CD8-positive, alpha-beta memory T cell (primary cell): ENCODE measurements at regions of chr9 and their contacts with region 1.

Region 1: DNA sequence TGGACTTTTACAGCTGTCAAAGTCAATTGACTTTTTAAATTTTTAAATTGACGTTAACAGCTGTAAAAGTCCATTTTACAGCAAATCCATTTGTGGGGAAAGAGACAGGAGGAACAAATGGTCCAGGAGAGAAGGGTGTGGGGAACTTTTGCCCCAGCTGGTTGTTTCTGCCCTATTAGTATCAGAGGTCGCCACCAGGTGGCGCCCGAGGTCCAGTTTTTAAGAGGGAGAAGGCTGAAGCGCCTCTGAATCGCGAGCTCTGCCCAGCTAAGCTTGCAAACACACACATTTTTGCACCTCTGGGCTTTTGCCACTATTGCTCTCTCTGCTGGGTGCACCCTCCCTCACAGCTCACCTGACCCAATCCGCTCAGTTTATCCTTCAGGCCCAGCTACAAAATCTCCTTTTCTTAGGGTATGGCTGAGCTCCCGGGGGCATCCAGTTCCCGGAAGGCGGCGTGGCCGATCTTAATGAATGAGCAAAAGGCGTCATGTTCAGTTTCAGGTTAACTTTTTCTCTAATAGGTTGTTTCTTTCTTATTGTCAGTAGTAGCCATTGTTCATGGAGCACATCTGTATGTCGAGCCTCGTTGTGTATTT is 6.3 kb upstream of the TTLL11 start:
- DNase-seq: peak; percentile 61 to 85 (median 72)
- H3K4me3 ChIP-seq: no peak overlapping the region
- H3K4me3 Mint-ChIP-seq: peak overlapping the region in 5 of 7 donors; percentile 25 to 61 (median 41)
- H3K27ac ChIP-seq: no peak overlapping the region
- H3K27ac Mint-ChIP-seq: peak overlapping the region in 1 of 8 donors; percentile 24
- H3K4me1 ChIP-seq: peaks cover 13% of the 10 kb centered on the region
- H3K4me1 Mint-ChIP-seq: peaks cover 13 to 17% (median 16%) of the 10 kb centered on the region in 3 donors
- H3K27me3 ChIP-seq: no peaks in the 10 kb centered on the region
- H3K27me3 Mint-ChIP-seq: peaks cover 2 to 6% of the 10 kb centered on the region in 2 donors

Region 2: DNA sequence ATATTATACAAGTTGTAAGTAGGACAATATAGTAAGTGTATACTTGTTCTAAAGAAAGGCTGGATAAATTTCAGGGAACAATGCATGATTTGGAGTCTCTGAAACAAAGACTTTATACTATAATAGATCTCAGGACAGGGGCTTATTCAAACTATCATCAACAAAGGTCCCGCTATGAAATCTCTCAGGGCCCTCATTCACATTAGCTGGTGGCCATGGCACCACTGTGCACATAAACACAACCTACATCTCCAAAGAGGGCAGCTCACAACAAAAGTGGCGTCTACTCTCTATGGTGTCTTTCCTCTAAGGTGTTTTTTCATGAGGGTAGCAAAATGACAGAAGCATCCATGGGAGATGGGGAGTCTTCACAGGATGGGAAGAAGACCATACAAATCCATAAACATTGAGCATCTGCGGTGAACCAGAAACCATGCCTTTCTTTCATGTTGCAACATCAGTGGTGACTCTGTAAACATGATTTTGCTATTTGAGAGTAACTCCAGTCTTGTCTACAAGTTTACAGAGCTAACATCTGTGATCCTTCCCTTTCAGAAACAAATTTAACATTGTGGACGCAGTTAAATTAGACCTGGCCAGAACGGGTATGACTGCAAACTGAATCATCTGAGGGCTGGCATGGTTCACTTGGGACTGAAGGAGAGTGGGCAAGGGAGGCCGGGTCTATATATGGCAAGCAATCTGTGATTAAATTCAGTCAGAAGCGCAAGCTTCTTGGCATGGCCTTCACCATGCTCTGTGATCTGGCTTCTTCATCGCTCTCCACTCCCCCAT is 11.8 kb before region 1 on chr9:
- CTCF ChIA-PET with region 1: interaction called, 11 read pairs
- POLR2A ChIA-PET with region 1: no interaction called
- DNase-seq: no peak
- H3K4me3 ChIP-seq: no peak overlapping the region
- H3K4me3 Mint-ChIP-seq: no peak overlapping the region
- H3K27ac ChIP-seq: no peak overlapping the region
- H3K27ac Mint-ChIP-seq: no peak overlapping the region
- H3K4me1 ChIP-seq: peaks cover 24% of the 10 kb centered on the region
- H3K4me1 Mint-ChIP-seq: peaks cover 21 to 34% (median 28%) of the 10 kb centered on the region in 3 donors
- H3K27me3 ChIP-seq: no peaks in the 10 kb centered on the region
- H3K27me3 Mint-ChIP-seq: no peaks in the 10 kb centered on the region

Region 3: DNA sequence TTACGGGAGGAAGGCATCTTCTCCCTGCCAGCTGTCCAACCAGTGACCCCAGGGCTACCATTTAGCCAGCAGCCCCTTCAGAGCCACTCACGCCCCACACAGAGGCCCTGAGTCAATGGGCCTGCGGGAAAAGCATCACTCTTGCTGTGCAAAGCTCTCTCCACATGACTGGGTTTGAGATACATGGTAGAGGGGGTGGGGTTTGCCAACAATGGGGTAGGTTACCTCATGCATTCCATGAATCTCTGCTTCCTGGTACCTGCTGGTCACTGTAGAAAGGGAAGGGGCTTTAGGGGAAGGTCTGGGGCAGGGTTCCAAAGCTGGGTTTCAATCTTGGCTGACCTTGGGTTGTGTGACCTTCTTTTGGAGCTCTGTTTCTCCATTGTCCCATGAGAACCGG is 16.7 kb after region 1 on chr9:
- CTCF ChIA-PET with region 1: interaction called, 96 read pairs
- POLR2A ChIA-PET with region 1: no interaction called
- DNase-seq: no peak
- H3K4me3 ChIP-seq: no peak overlapping the region
- H3K4me3 Mint-ChIP-seq: no peak overlapping the region
- H3K27ac ChIP-seq: no peak overlapping the region
- H3K27ac Mint-ChIP-seq: no peak overlapping the region
- H3K4me1 ChIP-seq: no peaks in the 10 kb centered on the region
- H3K4me1 Mint-ChIP-seq: no peaks in the 10 kb centered on the region
- H3K27me3 ChIP-seq: no peaks in the 10 kb centered on the region
- H3K27me3 Mint-ChIP-seq: peaks cover 5 to 22% of the 10 kb centered on the region in 2 donors

Region 4: DNA sequence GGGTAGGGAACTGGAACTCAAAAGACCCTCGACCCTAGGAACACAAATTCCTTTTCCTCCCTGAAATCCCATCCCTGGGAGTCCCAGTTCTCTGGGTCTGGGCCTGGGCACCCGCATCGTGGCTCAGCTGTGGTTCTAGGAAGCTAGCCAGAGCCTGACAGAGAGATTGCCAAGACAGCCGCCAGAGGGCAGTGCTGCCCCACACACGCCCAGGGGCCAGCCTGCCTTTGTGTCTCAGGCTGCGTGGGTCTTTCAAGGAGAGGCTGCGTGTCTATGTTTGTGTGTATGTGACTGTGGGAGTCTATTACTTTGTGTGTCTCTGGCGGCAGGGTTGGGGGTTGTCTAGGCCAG is 25.8 kb after region 1 on chr9:
- CTCF ChIA-PET with region 1: interaction called, 96 read pairs
- POLR2A ChIA-PET with region 1: no interaction called
- DNase-seq: peak; percentile 60 to 80 (median 66)
- H3K4me3 ChIP-seq: no peak overlapping the region
- H3K4me3 Mint-ChIP-seq: peak overlapping the region in 5 of 7 donors; percentile 6 to 67 (median 65)
- H3K27ac ChIP-seq: no peak overlapping the region
- H3K27ac Mint-ChIP-seq: peak overlapping the region in 2 of 8 donors; percentile 2 to 77
- H3K4me1 ChIP-seq: peaks cover 5% of the 10 kb centered on the region
- H3K4me1 Mint-ChIP-seq: peaks cover 21 to 41% (median 22%) of the 10 kb centered on the region in 3 donors
- H3K27me3 ChIP-seq: peaks cover 15% of the 10 kb centered on the region
- H3K27me3 Mint-ChIP-seq: peaks cover 30 to 44% of the 10 kb centered on the region in 2 donors

Region 5: GRCh38 chr9:122810306-122810946 is 711.1 kb after region 1 on chr9:
- CTCF ChIA-PET with region 1: interaction called, 18 read pairs
- POLR2A ChIA-PET with region 1: no interaction called
- DNase-seq: peak; percentile 57 to 79 (median 58)
- H3K4me3 ChIP-seq: no peak overlapping the region
- H3K4me3 Mint-ChIP-seq: no peak overlapping the region
- H3K27ac ChIP-seq: no peak overlapping the region
- H3K27ac Mint-ChIP-seq: no peak overlapping the region
- H3K4me1 ChIP-seq: peaks cover 6% of the 10 kb centered on the region
- H3K4me1 Mint-ChIP-seq: peaks cover 15 to 29% (median 21%) of the 10 kb centered on the region in 3 donors
- H3K27me3 ChIP-seq: no peaks in the 10 kb centered on the region
- H3K27me3 Mint-ChIP-seq: no peaks in the 10 kb centered on the region